Tibial artery (tissue), 4 donors: ENCODE measurements at regions of chr4 and their contacts with region 1.

Region 1: GRCh38 chr4:112633477-112634235 is 3.1 kb downstream of the ZGRF1 start:
- DNase-seq: no peak
- H3K4me3 ChIP-seq: no peak overlapping the region
- H3K27ac ChIP-seq: no peak overlapping the region
- H3K4me1 ChIP-seq: peaks cover 0 to 16% (median 12%) of the 10 kb centered on the region in 4 donors
- H3K27me3 ChIP-seq: no peaks in the 10 kb centered on the region
- CTCF ChIP-seq: peak; percentile 39 to 44

Region 2: GRCh38 chr4:112616984-112617383 is 16.7 kb before region 1 on chr4:
- intact Hi-C with region 1: no loop called
- DNase-seq: no peak
- H3K4me3 ChIP-seq: no peak overlapping the region
- H3K27ac ChIP-seq: no peak overlapping the region
- H3K4me1 ChIP-seq: no peaks in the 10 kb centered on the region
- H3K27me3 ChIP-seq: no peaks in the 10 kb centered on the region
- CTCF ChIP-seq: no peak

Region 3: DNA sequence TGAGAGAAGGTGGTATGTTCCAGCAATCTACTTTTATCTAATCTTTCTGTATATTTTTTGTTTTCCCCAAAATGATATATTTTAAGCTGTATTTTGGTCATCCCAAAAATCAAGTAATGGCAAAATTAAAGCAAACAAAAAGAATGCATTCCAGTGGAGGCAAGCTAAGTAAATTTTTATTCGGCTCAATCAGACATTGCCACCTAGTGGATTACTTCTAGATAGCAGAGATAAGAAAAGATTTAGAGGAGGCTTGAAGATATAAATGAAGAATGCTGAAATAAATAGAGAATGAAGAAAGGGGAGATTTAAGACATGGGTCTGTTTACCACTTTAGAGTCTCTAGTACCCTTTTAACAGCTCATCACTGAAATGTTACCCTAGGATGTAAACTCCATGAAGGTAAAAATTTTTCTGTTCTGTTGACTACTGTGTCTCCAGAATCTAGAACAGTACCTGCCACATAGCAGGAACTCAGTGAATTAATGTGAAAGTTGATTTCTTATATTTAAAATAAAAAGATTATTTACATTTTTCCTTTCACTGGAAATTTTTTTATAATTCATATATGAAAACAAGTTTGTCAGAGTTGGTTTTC is 304.9 kb after region 1 on chr4:
- intact Hi-C with region 1: loop called (anchors 5 kb)
- DNase-seq: no peak
- H3K4me3 ChIP-seq: no peak overlapping the region
- H3K27ac ChIP-seq: no peak overlapping the region
- H3K4me1 ChIP-seq: peaks cover 0 to 4% (median 0%) of the 10 kb centered on the region in 4 donors
- H3K27me3 ChIP-seq: no peaks in the 10 kb centered on the region
- CTCF ChIP-seq: peak; percentile 75 to 77